Activated CD8-positive, alpha-beta T cell treated with anti-CD3 and anti-CD28 coated beads for 36 hours (primary cell): ENCODE measurements at regions of chr1 and their contacts with region 1.

Region 1: DNA sequence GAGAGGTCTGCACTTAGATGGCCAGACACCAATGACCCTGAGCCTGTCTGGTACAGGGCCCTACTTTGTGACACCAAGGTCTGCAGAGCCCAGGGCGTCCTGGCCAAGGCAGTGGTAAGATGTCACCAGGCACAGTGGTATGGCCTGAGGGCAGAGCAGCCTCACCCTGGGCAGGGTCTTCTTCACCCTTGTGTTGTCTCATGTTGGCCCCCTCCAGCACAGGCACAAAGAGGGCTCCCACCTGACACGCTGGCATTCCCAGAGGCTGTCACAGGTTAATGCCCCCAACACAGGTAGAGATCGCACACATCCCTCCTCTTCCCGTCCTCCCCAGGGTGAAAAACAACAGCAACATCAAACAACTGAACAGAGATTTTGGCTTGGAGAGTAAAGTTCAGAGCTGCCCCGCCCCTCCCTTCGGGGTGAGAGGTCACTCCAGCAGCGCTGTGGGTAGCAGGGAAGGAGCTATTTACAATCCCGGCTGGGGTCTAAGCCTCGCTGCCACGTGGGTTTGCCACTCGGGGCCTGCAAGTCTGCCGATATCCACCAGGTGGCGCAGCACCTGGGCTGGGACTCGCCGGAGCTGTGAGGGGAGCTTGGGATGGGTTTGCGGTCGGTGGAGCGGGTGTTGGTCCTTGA is 12.6 kb downstream of the EFNA3 start:
- DNase-seq: peak; percentile 86
- ATAC-seq: peak; percentile 88
- H3K4me3 Mint-ChIP-seq: peak overlapping the region; percentile 12
- H3K27ac Mint-ChIP-seq: no peak overlapping the region
- H3K4me1 Mint-ChIP-seq: peaks cover 2% of the 10 kb centered on the region
- H3K27me3 Mint-ChIP-seq: peaks cover 9% of the 10 kb centered on the region
- CTCF ChIP-seq: peak; percentile 99

Region 2: DNA sequence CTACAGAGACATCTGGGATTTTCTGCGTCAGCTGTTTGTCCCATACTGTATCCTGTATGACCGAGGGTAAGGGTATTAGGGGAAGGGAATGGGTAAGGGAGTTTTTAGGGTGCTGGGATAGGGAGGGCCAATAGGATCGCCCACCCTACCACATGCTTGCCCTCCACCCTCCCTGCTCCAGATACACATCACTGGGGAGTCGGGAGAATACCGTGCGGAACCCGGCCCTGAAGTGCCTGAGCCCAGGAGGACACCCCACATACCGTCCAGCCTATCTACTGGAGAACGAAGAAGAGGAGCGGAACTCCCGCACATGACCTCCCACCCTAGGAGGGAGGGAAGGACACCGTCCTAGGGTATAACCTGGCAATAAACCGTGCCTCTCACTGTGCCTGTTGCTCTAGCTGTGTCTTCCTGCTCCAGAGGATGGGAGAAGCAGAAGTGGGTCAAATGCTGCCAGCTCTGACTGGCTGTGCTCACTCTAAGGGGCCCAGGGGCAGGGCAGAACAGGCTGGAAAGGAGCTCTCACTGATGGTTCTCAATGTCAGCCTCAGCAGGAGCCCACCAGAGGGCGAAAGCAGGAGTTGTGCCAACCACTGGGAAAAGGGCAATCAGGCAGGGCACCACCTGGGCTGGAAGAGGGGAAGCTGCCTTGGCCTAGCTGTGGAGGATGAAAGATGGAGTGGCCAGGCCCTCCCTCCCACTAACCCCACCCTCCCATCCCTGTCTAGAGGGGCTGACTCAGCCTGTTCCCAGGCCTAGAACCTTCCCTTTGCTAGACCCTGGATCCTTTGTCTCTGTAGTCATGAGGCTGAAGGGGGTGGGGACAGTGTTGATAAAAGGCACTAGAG is 98.2 kb before region 1 on chr1:
- CTCF ChIA-PET with region 1: no interaction called
- POLR2A ChIA-PET with region 1: no interaction called
- intact Hi-C with region 1: no loop called
- DNase-seq: no peak
- ATAC-seq: no peak
- H3K4me3 Mint-ChIP-seq: no peak overlapping the region
- H3K27ac Mint-ChIP-seq: no peak overlapping the region
- H3K4me1 Mint-ChIP-seq: peaks cover 29% of the 10 kb centered on the region
- H3K27me3 Mint-ChIP-seq: no peaks in the 10 kb centered on the region
- CTCF ChIP-seq: no peak

Region 3: DNA sequence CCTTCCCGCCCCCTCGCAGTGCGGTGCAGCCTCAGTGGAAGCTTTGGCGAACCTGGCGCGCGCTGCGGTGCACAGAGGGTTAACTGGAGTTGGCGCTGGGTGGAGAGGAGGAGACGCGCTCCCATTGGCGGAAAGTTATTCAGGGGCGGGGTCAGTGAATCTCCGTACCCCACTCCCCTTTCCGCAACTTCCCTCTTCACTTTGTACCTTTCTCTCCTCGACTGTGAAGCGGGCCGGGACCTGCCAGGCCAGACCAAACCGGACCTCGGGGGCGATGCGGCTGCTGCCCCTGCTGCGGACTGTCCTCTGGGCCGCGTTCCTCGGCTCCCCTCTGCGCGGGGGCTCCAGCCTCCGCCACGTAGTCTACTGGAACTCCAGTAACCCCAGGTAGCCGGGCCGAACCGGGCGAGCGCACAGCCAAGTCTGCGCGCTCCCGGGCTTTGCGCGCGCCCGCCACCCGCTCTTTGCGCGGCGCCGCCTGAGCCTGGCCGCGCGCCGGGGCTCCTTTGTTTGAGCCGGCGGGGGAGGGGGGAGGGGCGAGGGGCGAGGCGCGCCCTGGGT is 27.6 kb before region 1 on chr1 and contains the start of gene EFNA4:
- CTCF ChIA-PET with region 1: interaction called, 278 read pairs
- POLR2A ChIA-PET with region 1: interaction called, 12 read pairs
- intact Hi-C with region 1: no loop called
- DNase-seq: peak; percentile 88
- ATAC-seq: peak; percentile 80
- H3K4me3 Mint-ChIP-seq: peak within 1 kb of the TSS; percentile 77
- H3K27ac Mint-ChIP-seq: peak within 1 kb of the TSS; percentile 39
- H3K4me1 Mint-ChIP-seq: peaks cover 32% of the 10 kb centered on the region
- H3K27me3 Mint-ChIP-seq: no peaks in the 10 kb centered on the region
- CTCF ChIP-seq: no peak
- total RNA-seq, gene EFNA4: 7.1 to 7.8 TPM

Region 4: GRCh38 chr1:155077758-155078445 is 13.3 kb before region 1 on chr1:
- CTCF ChIA-PET with region 1: interaction called, 47 read pairs
- POLR2A ChIA-PET with region 1: interaction called, 3 read pairs
- intact Hi-C with region 1: no loop called
- DNase-seq: no peak
- ATAC-seq: no peak
- H3K4me3 Mint-ChIP-seq: no peak overlapping the region
- H3K27ac Mint-ChIP-seq: no peak overlapping the region
- H3K4me1 Mint-ChIP-seq: peaks cover 32% of the 10 kb centered on the region
- H3K27me3 Mint-ChIP-seq: peaks cover 26% of the 10 kb centered on the region
- CTCF ChIP-seq: no peak

Region 5: DNA sequence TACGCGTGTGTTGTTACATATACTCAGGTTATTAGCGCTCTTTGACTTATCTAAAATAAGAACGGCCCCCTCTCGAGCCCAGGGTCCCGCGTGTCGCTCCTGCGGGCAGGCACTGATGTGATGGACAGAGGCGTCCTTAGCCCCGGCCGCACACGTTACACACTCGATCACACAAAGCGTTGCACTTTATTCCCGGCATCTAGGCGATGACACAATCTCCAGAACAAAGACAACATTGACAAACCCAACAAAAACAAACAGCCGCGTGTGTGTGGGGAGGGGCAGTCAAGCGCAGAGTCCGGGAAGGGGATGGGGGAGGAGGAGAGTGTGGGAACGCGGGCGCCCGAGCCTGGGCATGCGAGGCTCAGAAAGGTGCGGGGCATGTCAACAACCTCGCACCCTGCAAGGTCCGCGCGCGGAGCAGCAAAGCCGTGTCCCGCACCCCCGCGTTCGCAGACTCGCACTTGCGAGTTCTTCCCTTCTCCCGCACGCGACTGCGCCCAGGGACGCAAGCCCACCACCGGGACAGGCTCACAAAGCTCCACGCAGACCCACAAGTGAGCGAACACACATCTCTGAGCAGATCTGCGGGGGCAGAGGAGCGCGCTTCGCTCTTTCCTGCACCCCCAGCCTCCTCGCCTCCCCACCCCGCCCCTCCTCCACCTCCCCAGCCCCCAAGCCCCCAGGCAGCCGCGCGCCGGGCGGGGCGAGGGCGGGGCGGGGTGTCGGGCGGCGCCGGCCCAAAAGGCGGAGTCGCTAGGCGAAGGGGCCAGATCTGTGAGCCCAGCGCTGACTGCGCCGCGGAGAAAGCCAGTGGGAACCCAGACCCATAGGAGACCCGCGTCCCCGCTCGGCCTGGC is 36.1 kb after region 1 on chr1 and contains the start of gene EFNA1:
- CTCF ChIA-PET with region 1: interaction called, 31 read pairs
- POLR2A ChIA-PET with region 1: no interaction called
- intact Hi-C with region 1: no loop called
- DNase-seq: peak; percentile 43
- ATAC-seq: peak; percentile 59
- H3K4me3 Mint-ChIP-seq: peak within 1 kb of the TSS; percentile 73
- H3K27ac Mint-ChIP-seq: peak within 1 kb of the TSS; percentile 34
- H3K4me1 Mint-ChIP-seq: peaks cover 34% of the 10 kb centered on the region
- H3K27me3 Mint-ChIP-seq: peaks cover 21% of the 10 kb centered on the region
- CTCF ChIP-seq: no peak
- total RNA-seq, gene EFNA1: 0.59 to 0.60 TPM

Region 6: GRCh38 chr1:155145491-155145890 is 54.3 kb after region 1 on chr1:
- CTCF ChIA-PET with region 1: interaction called, 12 read pairs
- POLR2A ChIA-PET with region 1: interaction called, 3 read pairs
- intact Hi-C with region 1: no loop called
- DNase-seq: no peak
- ATAC-seq: no peak
- H3K4me3 Mint-ChIP-seq: no peak overlapping the region
- H3K27ac Mint-ChIP-seq: no peak overlapping the region
- H3K4me1 Mint-ChIP-seq: peaks cover 7% of the 10 kb centered on the region
- H3K27me3 Mint-ChIP-seq: peaks cover 7% of the 10 kb centered on the region
- CTCF ChIP-seq: no peak

Region 7: GRCh38 chr1:155193275-155193990 is 102.2 kb after region 1 on chr1:
- CTCF ChIA-PET with region 1: interaction called, 13 read pairs
- POLR2A ChIA-PET with region 1: no interaction called
- intact Hi-C with region 1: no loop called
- DNase-seq: peak; percentile 84
- ATAC-seq: peak; percentile 62
- H3K4me3 Mint-ChIP-seq: peak overlapping the region; percentile 90
- H3K27ac Mint-ChIP-seq: peak overlapping the region; percentile 99
- H3K4me1 Mint-ChIP-seq: peaks cover 28% of the 10 kb centered on the region
- H3K27me3 Mint-ChIP-seq: no peaks in the 10 kb centered on the region
- CTCF ChIP-seq: peak; percentile 98

Region 8: DNA sequence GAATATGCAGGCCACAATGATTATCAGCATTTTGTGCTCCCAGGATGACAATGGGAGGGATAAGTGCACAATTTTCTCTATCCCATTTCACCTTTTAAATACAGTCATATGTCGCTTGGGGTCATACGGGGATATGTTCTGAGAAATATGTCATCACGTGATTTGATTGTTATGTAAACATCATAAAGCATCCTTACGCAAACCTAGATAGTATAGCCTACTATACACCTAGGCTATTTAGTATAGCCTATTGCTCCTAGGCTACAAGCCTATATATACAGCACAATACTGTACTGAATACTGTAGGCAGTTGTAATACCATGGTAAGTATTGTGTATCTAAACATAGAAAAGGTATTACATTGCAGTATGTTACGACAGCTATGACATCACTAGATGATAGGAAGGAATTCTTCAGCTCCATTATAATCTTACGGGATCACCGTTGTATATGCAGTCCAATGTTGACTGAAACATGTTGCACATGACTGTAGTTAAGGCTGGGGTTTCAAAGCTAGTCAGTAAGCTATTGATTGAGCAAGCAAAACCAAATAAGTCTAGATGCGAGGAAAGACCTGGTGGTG is 248.4 kb after region 1 on chr1:
- CTCF ChIA-PET with region 1: no interaction called
- POLR2A ChIA-PET with region 1: no interaction called
- intact Hi-C with region 1: no loop called
- DNase-seq: no peak
- ATAC-seq: no peak
- H3K4me3 Mint-ChIP-seq: no peak overlapping the region
- H3K27ac Mint-ChIP-seq: no peak overlapping the region
- H3K4me1 Mint-ChIP-seq: peaks cover 3% of the 10 kb centered on the region
- H3K27me3 Mint-ChIP-seq: no peaks in the 10 kb centered on the region
- CTCF ChIP-seq: no peak